ENCODE measurements at regions of chr11 and their contacts with region 1.

Region 1: GRCh38 chr11:130002846-130003716 is 446 bp upstream of the PRDM10 start:
- DNase-seq: peak; percentile 76 to 95 (median 87)
- ATAC-seq: peak; percentile 72 to 81 (median 78)
- H3K4me3 ChIP-seq: peak overlapping the region; percentile 61 to 87
- H3K4me3 Mint-ChIP-seq: peak overlapping the region; percentile 86 to 100 (median 99)
- H3K27ac ChIP-seq: peak overlapping the region; percentile 95
- H3K27ac Mint-ChIP-seq: peak overlapping the region; percentile 100
- H3K4me1 ChIP-seq: peaks cover 8 to 26% of the 10 kb centered on the region in 2 experiments
- H3K4me1 Mint-ChIP-seq: peaks cover 36 to 48% (median 42%) of the 10 kb centered on the region in 3 donors
- H3K27me3 ChIP-seq: no peaks in the 10 kb centered on the region
- H3K27me3 Mint-ChIP-seq: no peaks in the 10 kb centered on the region

Region 2: DNA sequence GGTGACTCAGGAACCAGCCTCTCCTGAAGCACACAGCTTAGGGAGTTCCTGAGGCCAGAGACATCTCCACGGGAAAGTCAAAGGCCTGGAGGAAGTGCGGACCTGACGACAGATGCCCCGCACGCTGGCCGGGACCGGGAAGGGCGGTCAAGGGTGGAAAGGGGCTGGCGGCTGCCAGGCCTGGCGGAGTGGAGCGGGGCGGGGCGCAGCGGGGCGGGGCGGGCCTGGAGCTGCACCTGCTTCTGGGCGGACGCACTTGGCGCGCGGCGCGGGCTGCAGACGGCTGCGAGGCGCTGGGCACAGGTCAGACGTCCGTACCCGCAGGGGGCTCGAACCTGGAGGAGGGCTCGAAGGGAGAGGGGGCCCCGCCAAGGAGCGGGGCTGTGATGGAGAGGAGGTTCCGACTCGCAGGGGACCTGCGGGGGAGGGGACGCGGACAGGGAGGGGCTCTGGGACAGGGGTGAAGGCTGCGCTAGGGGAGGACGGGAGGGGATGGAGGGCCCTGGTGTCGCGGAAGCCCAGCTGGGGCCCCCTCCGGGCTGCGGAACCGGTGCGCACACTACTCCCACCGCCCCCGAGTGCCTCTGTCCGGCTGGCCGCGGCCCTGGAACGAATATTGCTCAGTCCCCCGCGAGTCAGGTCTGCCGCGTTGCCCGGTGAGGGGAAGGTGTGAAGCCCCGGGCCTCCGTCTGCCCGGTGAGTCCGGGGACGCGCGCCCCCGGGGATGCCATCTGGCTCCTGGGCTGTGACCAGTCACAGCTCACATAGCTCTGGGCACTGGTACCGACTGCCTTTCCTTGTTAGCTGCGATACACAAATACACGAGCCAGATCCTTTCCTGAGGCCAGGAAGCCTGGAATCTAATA is 187.3 kb before region 1 on chr11 and contains the start of gene TMEM45B:
- CTCF ChIA-PET with region 1: interaction called in 1 of 2 experiments, 17 read pairs
- POLR2A ChIA-PET with region 1: no interaction called
- DNase-seq: peak in 18 of 35 experiments; percentile 8 to 51 (median 27)
- ATAC-seq: peak; percentile 27 to 60 (median 58)
- H3K4me3 ChIP-seq: peak within 1 kb of the TSS; percentile 7 to 56
- H3K4me3 Mint-ChIP-seq: peak within 1 kb of the TSS; percentile 80 to 92 (median 80)
- H3K27ac ChIP-seq: no peak within 1 kb of the TSS
- H3K27ac Mint-ChIP-seq: peak within 1 kb of the TSS; percentile 88 to 95
- H3K4me1 ChIP-seq: peaks cover 3 to 31% of the 10 kb centered on the region in 2 experiments
- H3K4me1 Mint-ChIP-seq: peaks cover 41 to 73% (median 65%) of the 10 kb centered on the region in 3 donors
- H3K27me3 ChIP-seq: peaks cover 0 to 28% of the 10 kb centered on the region in 2 experiments
- H3K27me3 Mint-ChIP-seq: peaks cover 12 to 17% of the 10 kb centered on the region in 2 donors
- total RNA-seq, gene TMEM45B: 1.4 to 22.7 (median 14.3) TPM

Region 3: GRCh38 chr11:129955282-129955681 is 47.8 kb before region 1 on chr11:
- CTCF ChIA-PET with region 1: no interaction called
- POLR2A ChIA-PET with region 1: interaction called in 1 of 2 experiments, 12 read pairs
- DNase-seq: no peak
- ATAC-seq: no peak
- H3K4me3 ChIP-seq: no peak overlapping the region
- H3K4me3 Mint-ChIP-seq: no peak overlapping the region
- H3K27ac ChIP-seq: no peak overlapping the region
- H3K27ac Mint-ChIP-seq: no peak overlapping the region
- H3K4me1 ChIP-seq: no peaks in the 10 kb centered on the region
- H3K4me1 Mint-ChIP-seq: no peaks in the 10 kb centered on the region
- H3K27me3 ChIP-seq: no peaks in the 10 kb centered on the region
- H3K27me3 Mint-ChIP-seq: no peaks in the 10 kb centered on the region

Region 4: GRCh38 chr11:129992161-129992944 is 10.7 kb before region 1 on chr11:
- CTCF ChIA-PET with region 1: interaction called in 1 of 2 experiments, 28 read pairs
- POLR2A ChIA-PET with region 1: interaction called, 5 to 6 read pairs
- DNase-seq: peak in 33 of 35 experiments; percentile 4 to 65 (median 32)
- ATAC-seq: peak; percentile 67 to 87 (median 73)
- H3K4me3 ChIP-seq: no peak overlapping the region
- H3K4me3 Mint-ChIP-seq: no peak overlapping the region
- H3K27ac ChIP-seq: no peak overlapping the region
- H3K27ac Mint-ChIP-seq: no peak overlapping the region
- H3K4me1 ChIP-seq: no peaks in the 10 kb centered on the region
- H3K4me1 Mint-ChIP-seq: peaks cover 6 to 18% (median 15%) of the 10 kb centered on the region in 3 donors
- H3K27me3 ChIP-seq: no peaks in the 10 kb centered on the region
- H3K27me3 Mint-ChIP-seq: no peaks in the 10 kb centered on the region

Region 5: DNA sequence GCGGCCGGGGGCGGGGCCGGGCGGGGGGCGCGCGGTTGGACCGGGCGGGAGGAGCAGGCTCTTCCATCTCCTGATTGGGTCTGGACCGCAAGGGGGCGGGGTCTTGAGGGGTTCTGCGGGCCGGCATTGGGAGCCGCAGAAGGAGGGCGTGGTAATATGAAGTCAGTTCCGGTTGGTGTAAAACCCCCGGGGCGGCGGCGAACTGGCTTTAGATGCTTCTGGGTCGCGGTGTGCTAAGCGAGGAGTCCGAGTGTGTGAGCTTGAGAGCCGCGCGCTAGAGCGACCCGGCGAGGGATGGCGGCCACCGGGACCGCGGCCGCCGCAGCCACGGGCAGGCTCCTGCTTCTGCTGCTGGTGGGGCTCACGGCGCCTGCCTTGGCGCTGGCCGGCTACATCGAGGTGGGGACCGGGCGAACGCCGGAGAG is 66.6 kb after region 1 on chr11 and contains the start of gene APLP2:
- CTCF ChIA-PET with region 1: interaction called, 5 to 16 read pairs
- POLR2A ChIA-PET with region 1: interaction called in 1 of 2 experiments, 26 read pairs
- DNase-seq: peak; percentile 87 to 99 (median 97)
- ATAC-seq: peak; percentile 89 to 93 (median 92)
- H3K4me3 ChIP-seq: peak within 1 kb of the TSS; percentile 84 to 86
- H3K4me3 Mint-ChIP-seq: peak within 1 kb of the TSS; percentile 92 to 97 (median 95)
- H3K27ac ChIP-seq: peak within 1 kb of the TSS; percentile 82
- H3K27ac Mint-ChIP-seq: peak within 1 kb of the TSS; percentile 94 to 96
- H3K4me1 ChIP-seq: peaks cover 2 to 14% of the 10 kb centered on the region in 2 experiments
- H3K4me1 Mint-ChIP-seq: peaks cover 21 to 33% (median 26%) of the 10 kb centered on the region in 3 donors
- H3K27me3 ChIP-seq: no peaks in the 10 kb centered on the region
- H3K27me3 Mint-ChIP-seq: no peaks in the 10 kb centered on the region
- total RNA-seq, gene APLP2: 36.4 to 61.9 (median 51.0) TPM